Activated B cell treated with CpG ODN at 0.5 μM for 24 hours (primary cell): ENCODE measurements at regions of chr3 and their contacts with region 1.

Region 1: DNA sequence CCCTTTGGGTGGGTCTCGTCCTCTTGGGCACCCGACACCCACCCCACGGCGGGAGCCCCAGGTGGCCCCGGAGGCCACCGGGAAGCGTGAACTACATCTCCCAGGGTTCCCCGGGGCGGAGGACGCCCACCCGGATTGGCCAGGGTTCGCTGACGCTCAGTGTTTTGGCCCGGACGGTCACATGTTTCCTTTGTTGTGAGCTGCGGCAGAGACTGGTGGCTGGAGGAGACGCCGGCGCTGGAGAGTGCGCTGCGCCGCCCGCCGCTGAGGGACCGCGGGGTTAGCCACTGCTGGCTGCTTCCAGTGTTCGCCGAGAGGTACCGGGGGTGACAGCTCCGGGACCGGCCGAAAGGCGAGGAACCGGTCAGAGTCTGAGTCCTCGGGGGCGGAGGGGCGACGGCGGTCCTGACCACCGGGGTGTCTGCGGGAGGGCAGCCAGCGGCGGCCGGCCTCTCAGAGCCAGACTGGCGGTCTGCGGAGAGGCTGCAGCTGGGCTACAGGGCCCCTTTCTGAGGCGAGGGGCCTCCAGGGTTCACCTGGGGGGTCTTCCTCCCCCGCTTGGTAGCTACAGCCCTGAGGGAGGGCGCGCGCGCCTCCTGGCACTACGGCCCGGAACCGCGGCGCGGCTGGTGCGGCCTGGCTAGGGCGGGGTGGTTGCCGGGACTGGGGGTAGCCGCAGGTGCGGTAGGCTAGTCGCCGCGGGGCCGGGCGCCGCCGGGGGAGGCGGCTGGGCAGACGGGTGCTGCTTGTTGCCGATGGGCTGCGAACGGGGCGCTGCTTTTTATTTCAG is at the start of gene KLHL24:
- DNase-seq: peak; percentile 83
- ATAC-seq: peak; percentile 73
- H3K4me3 Mint-ChIP-seq: peak within 1 kb of the TSS; percentile 92
- H3K27ac Mint-ChIP-seq: peak within 1 kb of the TSS; percentile 92
- H3K4me1 Mint-ChIP-seq: peaks cover 27% of the 10 kb centered on the region
- H3K27me3 Mint-ChIP-seq: no peaks in the 10 kb centered on the region
- CTCF ChIP-seq: no peak
- total RNA-seq, gene KLHL24: 31.6 and 33.9 TPM in 2 replicates

Region 2: DNA sequence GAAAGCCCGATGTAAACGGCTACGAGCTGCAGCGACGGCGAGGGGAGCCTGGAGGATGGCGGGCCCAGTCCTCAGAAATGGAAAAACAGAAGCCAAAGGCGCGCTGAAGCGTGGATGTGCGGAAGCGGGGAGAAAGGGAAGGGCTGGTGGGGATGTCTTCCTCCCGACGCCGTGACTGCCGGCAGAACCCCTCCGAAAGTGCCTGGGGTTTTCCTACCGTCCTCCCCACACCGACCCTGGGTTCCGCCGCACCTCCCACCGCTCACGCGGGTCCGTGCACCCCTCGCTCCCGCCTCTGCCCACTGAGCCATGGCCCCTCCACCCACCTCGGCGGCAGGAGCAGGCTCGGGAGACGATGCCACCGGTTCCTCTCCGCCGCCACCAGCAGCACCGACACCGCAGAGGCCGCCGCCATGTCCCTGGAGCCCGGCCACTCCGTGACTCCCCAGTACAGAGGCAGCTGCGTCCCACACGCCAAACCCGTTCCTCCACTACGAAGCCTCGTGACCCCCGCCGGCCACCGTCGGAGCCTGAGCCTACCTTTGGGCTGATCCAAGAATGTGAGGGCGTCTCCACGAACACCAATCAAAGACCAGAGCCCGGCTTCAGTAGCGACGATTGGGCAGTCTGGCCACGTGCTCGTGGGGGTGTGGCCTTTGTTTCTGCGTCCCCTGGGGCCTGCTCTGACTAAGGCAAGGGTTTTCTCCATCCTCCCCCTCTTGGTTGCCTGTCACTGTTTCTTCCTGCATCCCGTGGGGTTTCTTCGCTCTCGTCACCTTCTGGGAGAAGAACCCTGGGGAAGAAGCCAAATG is 536.4 kb before region 1 on chr3 and contains the start of gene MCCC1:
- CTCF ChIA-PET with region 1: no interaction called
- POLR2A ChIA-PET with region 1: no interaction called
- intact Hi-C with region 1: loop called (anchors 1 kb)
- DNase-seq: peak; percentile 91
- ATAC-seq: peak; percentile 96
- H3K4me3 Mint-ChIP-seq: peak within 1 kb of the TSS; percentile 97
- H3K27ac Mint-ChIP-seq: peak within 1 kb of the TSS; percentile 91
- H3K4me1 Mint-ChIP-seq: peaks cover 34% of the 10 kb centered on the region
- H3K27me3 Mint-ChIP-seq: no peaks in the 10 kb centered on the region
- CTCF ChIP-seq: no peak
- total RNA-seq, gene MCCC1: 25.2 and 31.6 TPM in 2 replicates

Region 3: DNA sequence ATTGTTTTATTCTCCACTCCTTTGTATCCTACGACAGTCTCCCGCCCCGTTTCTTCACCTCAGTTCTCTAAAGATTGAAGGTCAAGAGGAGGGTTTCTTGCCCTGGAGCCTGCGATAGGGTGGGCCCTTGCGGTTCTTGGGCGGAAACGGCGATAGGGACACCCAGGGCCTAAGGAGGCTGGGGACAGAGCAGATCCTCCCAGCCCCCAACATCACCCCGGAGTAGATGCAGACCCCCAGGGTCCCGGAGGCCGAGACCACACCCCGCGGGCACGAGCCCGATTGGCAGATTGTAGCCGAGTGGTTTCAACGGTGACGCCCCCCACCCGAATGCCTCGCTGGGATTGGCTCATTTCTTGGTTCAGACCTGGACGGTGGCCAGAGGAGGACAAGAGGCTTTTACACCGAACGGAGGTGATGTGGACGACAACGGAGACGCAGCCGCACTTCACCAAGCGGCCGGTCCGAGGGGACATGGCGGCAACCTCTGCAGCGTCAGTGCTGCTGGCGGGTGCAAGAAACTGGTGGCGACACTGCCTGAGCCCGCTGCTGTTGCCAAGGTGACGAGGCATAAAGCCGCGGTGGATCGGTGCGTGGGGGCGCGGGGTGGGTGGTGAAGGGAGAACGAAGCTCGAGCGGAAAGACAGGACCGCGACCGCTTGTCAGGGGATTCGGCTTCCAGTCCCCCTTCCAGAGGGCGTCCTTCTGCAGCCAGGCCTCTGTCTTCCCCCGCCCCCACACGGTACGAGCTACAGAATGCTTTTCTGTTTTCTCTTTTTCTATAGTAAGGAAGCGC is 188.2 kb before region 1 on chr3:
- CTCF ChIA-PET with region 1: no interaction called
- POLR2A ChIA-PET with region 1: no interaction called
- intact Hi-C with region 1: loop called (anchors 1 kb)
- DNase-seq: peak; percentile 68
- ATAC-seq: peak; percentile 95
- H3K4me3 Mint-ChIP-seq: peak overlapping the region; percentile 95
- H3K27ac Mint-ChIP-seq: peak overlapping the region; percentile 81
- H3K4me1 Mint-ChIP-seq: peaks cover 16% of the 10 kb centered on the region
- H3K27me3 Mint-ChIP-seq: no peaks in the 10 kb centered on the region
- CTCF ChIP-seq: no peak

Region 4: GRCh38 chr3:183527428-183528379 is 107.9 kb before region 1 on chr3:
- CTCF ChIA-PET with region 1: no interaction called
- POLR2A ChIA-PET with region 1: interaction called, 16 read pairs
- intact Hi-C with region 1: loop called (anchors 5 kb)
- DNase-seq: no peak
- ATAC-seq: peak; percentile 83
- H3K4me3 Mint-ChIP-seq: peak overlapping the region; percentile 73
- H3K27ac Mint-ChIP-seq: peak overlapping the region; percentile 87
- H3K4me1 Mint-ChIP-seq: peaks cover 77% of the 10 kb centered on the region
- H3K27me3 Mint-ChIP-seq: no peaks in the 10 kb centered on the region
- CTCF ChIP-seq: no peak

Region 5: GRCh38 chr3:183555541-183556081 is 80.0 kb before region 1 on chr3 and contains the start of gene KLHL6:
- CTCF ChIA-PET with region 1: no interaction called
- POLR2A ChIA-PET with region 1: interaction called, 10 read pairs
- intact Hi-C with region 1: loop called (anchors 1 kb)
- DNase-seq: peak; percentile 51
- ATAC-seq: peak; percentile 81
- H3K4me3 Mint-ChIP-seq: peak within 1 kb of the TSS; percentile 98
- H3K27ac Mint-ChIP-seq: peak within 1 kb of the TSS; percentile 99
- H3K4me1 Mint-ChIP-seq: peaks cover 54% of the 10 kb centered on the region
- H3K27me3 Mint-ChIP-seq: no peaks in the 10 kb centered on the region
- CTCF ChIP-seq: no peak
- total RNA-seq, gene KLHL6: 34.6 and 41.7 TPM in 2 replicates

Region 6: GRCh38 chr3:183697610-183698317 is 62.1 kb after region 1 on chr3 and contains the start of gene YEATS2:
- CTCF ChIA-PET with region 1: no interaction called
- POLR2A ChIA-PET with region 1: interaction called, 39 read pairs
- intact Hi-C with region 1: loop called (anchors 1 kb)
- DNase-seq: peak; percentile 77
- ATAC-seq: peak; percentile 89
- H3K4me3 Mint-ChIP-seq: peak within 1 kb of the TSS; percentile 91
- H3K27ac Mint-ChIP-seq: peak within 1 kb of the TSS; percentile 86
- H3K4me1 Mint-ChIP-seq: peaks cover 32% of the 10 kb centered on the region
- H3K27me3 Mint-ChIP-seq: no peaks in the 10 kb centered on the region
- CTCF ChIP-seq: no peak
- total RNA-seq, gene YEATS2: 24.0 and 26.2 TPM in 2 replicates

Region 7: DNA sequence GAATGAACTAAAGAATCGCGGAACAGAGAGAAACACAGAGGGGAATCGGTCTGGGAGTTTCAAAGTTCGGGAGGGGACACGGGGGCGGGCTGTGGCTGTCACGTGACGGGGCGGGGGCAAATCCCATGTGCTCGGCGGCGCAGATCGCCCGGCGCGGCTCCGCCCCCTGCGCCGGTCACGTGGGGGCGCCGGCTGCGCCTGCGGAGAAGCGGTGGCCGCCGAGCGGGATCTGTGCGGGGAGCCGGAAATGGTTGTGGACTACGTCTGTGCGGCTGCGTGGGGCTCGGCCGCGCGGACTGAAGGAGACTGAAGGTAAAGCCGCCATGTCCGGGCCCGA is 678.7 kb after region 1 on chr3 and contains the start of gene EIF4G1:
- CTCF ChIA-PET with region 1: no interaction called
- POLR2A ChIA-PET with region 1: no interaction called
- intact Hi-C with region 1: loop called (anchors 2 kb)
- DNase-seq: peak; percentile 92
- ATAC-seq: peak; percentile 86
- H3K4me3 Mint-ChIP-seq: peak within 1 kb of the TSS; percentile 86
- H3K27ac Mint-ChIP-seq: peak within 1 kb of the TSS; percentile 88
- H3K4me1 Mint-ChIP-seq: peaks cover 28% of the 10 kb centered on the region
- H3K27me3 Mint-ChIP-seq: no peaks in the 10 kb centered on the region
- CTCF ChIP-seq: no peak
- total RNA-seq, gene EIF4G1: 292 and 319 TPM in 2 replicates